Psoas muscle (tissue), 8 donors: ENCODE measurements at regions of chr20 and their contacts with region 1.

Region 1: DNA sequence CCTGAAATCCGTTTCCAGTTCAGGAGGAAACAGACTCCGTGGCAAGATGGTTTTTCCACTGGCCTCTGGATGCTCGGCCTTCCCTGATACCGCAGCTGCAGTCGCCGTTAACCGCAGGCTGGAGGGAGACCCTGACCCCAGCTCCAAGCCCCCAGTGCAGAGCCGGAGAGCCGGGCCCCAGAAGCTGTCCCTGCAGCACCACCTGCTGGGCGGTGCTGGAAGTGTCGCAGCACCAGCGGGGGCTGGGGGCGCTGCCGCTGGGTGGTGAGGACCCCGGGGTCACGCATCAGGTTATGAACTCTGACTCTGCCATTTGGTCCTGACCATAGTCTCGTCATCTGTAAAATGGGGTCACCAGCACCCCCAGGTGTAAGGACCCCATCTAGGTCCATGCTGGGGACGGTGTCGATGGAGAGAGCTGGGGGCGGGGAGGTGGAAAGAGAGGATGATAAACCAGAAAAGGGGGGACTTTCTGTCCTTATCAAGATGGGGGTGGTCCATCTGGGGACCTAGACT is 20.7 kb upstream of the CHRNA4 start:
- DNase-seq: no peak
- ATAC-seq: peak; percentile 44 to 63 (median 62)
- H3K4me3 ChIP-seq: no peak overlapping the region
- H3K27ac ChIP-seq: no peak overlapping the region
- H3K4me1 ChIP-seq: no peaks in the 10 kb centered on the region
- H3K27me3 ChIP-seq: peaks cover 0 to 56% (median 5%) of the 10 kb centered on the region in 3 donors
- CTCF ChIP-seq: peak; percentile 88

Region 2: GRCh38 chr20:63056236-63056948 is 325.5 kb before region 1 on chr20:
- intact Hi-C with region 1: loop called in 1 of 2 experiments (anchors 10 kb)
- DNase-seq: peak; percentile 37 to 68
- ATAC-seq: peak; percentile 65 to 88 (median 76)
- H3K4me3 ChIP-seq: no peak overlapping the region
- H3K27ac ChIP-seq: no peak overlapping the region
- H3K4me1 ChIP-seq: peaks cover 4% of the 10 kb centered on the region
- H3K27me3 ChIP-seq: peaks cover 0 to 68% (median 28%) of the 10 kb centered on the region in 3 donors
- CTCF ChIP-seq: peak; percentile 90

Region 3: DNA sequence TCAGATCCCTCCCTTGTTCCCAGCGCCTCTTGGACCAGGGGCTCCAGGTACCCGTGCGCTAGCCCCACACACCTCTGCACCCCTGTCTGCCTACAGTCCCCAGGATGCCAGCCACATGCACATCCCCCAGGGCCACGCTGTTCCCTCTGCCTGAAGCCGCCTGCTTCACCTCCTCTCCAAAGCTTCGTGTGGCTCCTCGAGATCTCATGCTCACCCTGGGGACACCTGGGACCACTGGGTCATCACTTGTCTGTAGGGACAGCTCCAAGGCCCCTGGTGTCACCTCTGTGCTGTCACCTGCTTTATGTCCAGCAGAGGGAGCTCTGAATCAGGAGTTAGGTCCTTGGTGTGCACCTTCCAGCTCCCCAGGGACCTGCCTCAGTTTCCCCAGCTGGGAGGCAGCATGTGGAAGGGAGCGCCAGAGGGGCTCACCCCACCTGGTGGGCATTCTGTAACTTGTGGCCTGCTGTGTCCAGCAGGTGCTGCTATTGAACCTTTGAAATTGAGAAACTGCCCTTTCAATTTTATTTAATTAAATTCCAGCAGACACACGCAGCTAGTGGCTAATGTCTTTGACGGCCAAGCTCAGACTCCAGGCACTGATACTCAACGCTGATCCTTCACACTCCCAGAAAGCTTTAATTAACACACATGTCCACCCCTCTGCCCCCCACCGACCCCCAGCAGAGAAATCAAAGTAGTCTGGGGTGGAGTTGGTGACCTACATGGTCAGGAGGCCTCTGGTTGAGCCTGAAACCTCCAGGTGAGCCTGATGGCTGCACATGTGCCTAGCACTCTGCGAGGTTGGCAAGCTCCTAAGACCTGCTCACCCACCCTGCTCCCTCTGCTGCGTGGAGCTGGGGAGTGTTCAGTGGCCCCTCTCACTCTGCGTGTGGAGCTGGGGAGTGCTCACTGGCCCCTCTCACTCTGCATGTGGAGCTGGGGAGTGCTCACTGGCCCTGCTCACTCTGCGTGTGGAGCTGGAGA is 158.4 kb before region 1 on chr20:
- intact Hi-C with region 1: loop called in 1 of 2 experiments (anchors 5 kb)
- DNase-seq: no peak
- ATAC-seq: peak; percentile 41 to 57 (median 54)
- H3K4me3 ChIP-seq: no peak overlapping the region
- H3K27ac ChIP-seq: no peak overlapping the region
- H3K4me1 ChIP-seq: no peaks in the 10 kb centered on the region
- H3K27me3 ChIP-seq: peaks cover 0 to 7% (median 2%) of the 10 kb centered on the region in 3 donors
- CTCF ChIP-seq: peak; percentile 64

Region 4: GRCh38 chr20:63309261-63310071 is 72.4 kb before region 1 on chr20:
- intact Hi-C with region 1: loop called (anchors 1 to 5 kb)
- DNase-seq: peak in 1 of 2 donors; percentile 48
- ATAC-seq: peak; percentile 65 to 79 (median 70)
- H3K4me3 ChIP-seq: no peak overlapping the region
- H3K27ac ChIP-seq: no peak overlapping the region
- H3K4me1 ChIP-seq: no peaks in the 10 kb centered on the region
- H3K27me3 ChIP-seq: peaks cover 0 to 59% (median 8%) of the 10 kb centered on the region in 3 donors
- CTCF ChIP-seq: peak; percentile 80

Region 5: GRCh38 chr20:63457737-63458136 is 75.9 kb after region 1 on chr20:
- intact Hi-C with region 1: no loop called
- DNase-seq: no peak
- ATAC-seq: peak; percentile 29 to 55 (median 39)
- H3K4me3 ChIP-seq: no peak overlapping the region
- H3K27ac ChIP-seq: no peak overlapping the region
- H3K4me1 ChIP-seq: no peaks in the 10 kb centered on the region
- H3K27me3 ChIP-seq: peaks cover 0 to 87% (median 25%) of the 10 kb centered on the region in 3 donors
- CTCF ChIP-seq: no peak